GM12878 (cell line): ENCODE measurements at regions of chr5 and their contacts with region 1.

Region 1: GRCh38 chr5:159156426-159157238 is 52.7 kb downstream of the RNF145 start:
- DNase-seq: peak; percentile 30
- ATAC-seq: peak; percentile 96
- H3K4me3 ChIP-seq: no peak overlapping the region
- H3K27ac ChIP-seq: no peak overlapping the region
- H3K4me1 ChIP-seq: peaks cover 7% of the 10 kb centered on the region
- H3K27me3 ChIP-seq: no peaks in the 10 kb centered on the region
- CTCF ChIP-seq: peak; percentile 79 to 83 (median 82)
- EP300 ChIP-seq: no peak
- POLR2A ChIP-seq: no peak
- RAD21 ChIP-seq: peak; percentile 93

Region 2: GRCh38 chr5:158634714-158635113 is 521.9 kb before region 1 on chr5:
- CTCF ChIA-PET with region 1: no interaction called
- POLR2A ChIA-PET with region 1: no interaction called
- RAD21 ChIA-PET with region 1: no interaction called
- SMC1A ChIA-PET with region 1: no interaction called
- in situ Hi-C with region 1: no loop called
- intact Hi-C with region 1: no loop called
- DNase-seq: no peak
- ATAC-seq: no peak
- H3K4me3 ChIP-seq: no peak overlapping the region
- H3K27ac ChIP-seq: no peak overlapping the region
- H3K4me1 ChIP-seq: no peaks in the 10 kb centered on the region
- H3K27me3 ChIP-seq: no peaks in the 10 kb centered on the region
- CTCF ChIP-seq: no peak
- EP300 ChIP-seq: no peak
- POLR2A ChIP-seq: no peak
- RAD21 ChIP-seq: no peak

Region 3: GRCh38 chr5:159171274-159171673 is 14.6 kb after region 1 on chr5:
- CTCF ChIA-PET with region 1: interaction called, 21 read pairs
- POLR2A ChIA-PET with region 1: no interaction called
- RAD21 ChIA-PET with region 1: interaction called, 5 read pairs
- SMC1A ChIA-PET with region 1: interaction called, 8 read pairs
- in situ Hi-C with region 1: no loop called
- intact Hi-C with region 1: no loop called
- DNase-seq: no peak
- ATAC-seq: peak; percentile 35; the same call in 2 of the 3 replicates
- H3K4me3 ChIP-seq: no peak overlapping the region
- H3K27ac ChIP-seq: no peak overlapping the region
- H3K4me1 ChIP-seq: no peaks in the 10 kb centered on the region
- H3K27me3 ChIP-seq: no peaks in the 10 kb centered on the region
- CTCF ChIP-seq: no peak
- EP300 ChIP-seq: no peak
- POLR2A ChIP-seq: no peak
- RAD21 ChIP-seq: no peak

Region 4: DNA sequence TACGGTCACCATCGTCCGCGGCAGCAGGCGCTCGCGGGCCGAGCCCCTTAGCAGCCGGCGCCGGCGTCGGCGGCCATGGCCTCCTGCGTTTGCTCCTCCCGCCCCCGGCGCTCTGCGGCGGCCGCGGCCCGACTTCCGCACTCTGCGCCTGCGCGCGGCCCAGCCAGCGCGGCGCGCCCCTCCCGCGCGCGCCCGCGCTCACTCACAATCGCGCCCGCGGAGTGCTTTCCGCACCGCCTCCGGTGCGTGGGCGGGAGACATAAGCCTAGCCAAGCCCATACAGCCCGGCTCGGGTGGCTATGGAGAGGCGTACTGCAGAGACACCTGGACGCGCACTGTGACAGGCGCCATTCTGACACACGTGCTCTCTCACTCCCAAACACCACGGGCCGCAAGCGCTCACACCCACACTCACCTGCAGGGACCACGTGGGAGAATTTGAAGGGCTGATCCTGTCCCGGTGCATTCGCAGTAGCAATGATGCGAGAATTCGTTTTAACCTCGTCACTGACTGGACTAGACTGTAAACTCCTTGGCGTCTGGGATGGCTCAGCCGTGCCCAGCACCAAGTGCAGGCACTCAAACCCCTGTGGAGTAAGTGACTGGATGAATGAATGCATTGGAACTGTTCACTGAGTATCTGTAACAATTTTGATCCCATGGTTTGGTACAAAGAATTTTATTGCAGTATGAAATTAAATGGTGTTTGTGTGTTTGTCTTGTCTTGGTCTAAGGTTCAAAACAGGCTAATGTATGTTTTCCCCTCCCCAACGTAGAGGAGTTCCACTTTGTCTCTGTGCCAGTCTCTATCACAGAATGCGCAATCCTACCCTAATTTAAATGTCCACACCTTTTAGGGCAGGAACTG is 53.0 kb after region 1 on chr5 and contains the start of gene RNF145:
- CTCF ChIA-PET with region 1: interaction called, 26 read pairs
- POLR2A ChIA-PET with region 1: interaction called, 3 read pairs
- RAD21 ChIA-PET with region 1: interaction called, 23 read pairs
- SMC1A ChIA-PET with region 1: interaction called, 16 read pairs
- in situ Hi-C with region 1: no loop called
- intact Hi-C with region 1: loop called (anchors 2 kb)
- DNase-seq: peak; percentile 62
- ATAC-seq: peak; percentile 71
- H3K4me3 ChIP-seq: peak within 1 kb of the TSS; percentile 79
- H3K27ac ChIP-seq: peak within 1 kb of the TSS; percentile 83
- H3K4me1 ChIP-seq: peaks cover 9% of the 10 kb centered on the region
- H3K27me3 ChIP-seq: no peaks in the 10 kb centered on the region
- CTCF ChIP-seq: no peak
- EP300 ChIP-seq: no peak
- POLR2A ChIP-seq: peak; percentile 87
- RAD21 ChIP-seq: no peak
- polyA plus RNA-seq, gene RNF145: 18.6 to 25.2 TPM

Region 5: GRCh38 chr5:159286420-159287035 is 129.9 kb after region 1 on chr5:
- CTCF ChIA-PET with region 1: interaction called, 43 read pairs
- POLR2A ChIA-PET with region 1: no interaction called
- RAD21 ChIA-PET with region 1: interaction called, 14 read pairs
- SMC1A ChIA-PET with region 1: interaction called, 20 read pairs
- in situ Hi-C with region 1: no loop called
- intact Hi-C with region 1: no loop called
- DNase-seq: no peak
- ATAC-seq: peak; percentile 56
- H3K4me3 ChIP-seq: no peak overlapping the region
- H3K27ac ChIP-seq: no peak overlapping the region
- H3K4me1 ChIP-seq: no peaks in the 10 kb centered on the region
- H3K27me3 ChIP-seq: no peaks in the 10 kb centered on the region
- CTCF ChIP-seq: peak; percentile 30 to 52 (median 36); a peak in 4 of 6 replicates
- EP300 ChIP-seq: no peak
- POLR2A ChIP-seq: no peak
- RAD21 ChIP-seq: peak; percentile 70

Region 6: DNA sequence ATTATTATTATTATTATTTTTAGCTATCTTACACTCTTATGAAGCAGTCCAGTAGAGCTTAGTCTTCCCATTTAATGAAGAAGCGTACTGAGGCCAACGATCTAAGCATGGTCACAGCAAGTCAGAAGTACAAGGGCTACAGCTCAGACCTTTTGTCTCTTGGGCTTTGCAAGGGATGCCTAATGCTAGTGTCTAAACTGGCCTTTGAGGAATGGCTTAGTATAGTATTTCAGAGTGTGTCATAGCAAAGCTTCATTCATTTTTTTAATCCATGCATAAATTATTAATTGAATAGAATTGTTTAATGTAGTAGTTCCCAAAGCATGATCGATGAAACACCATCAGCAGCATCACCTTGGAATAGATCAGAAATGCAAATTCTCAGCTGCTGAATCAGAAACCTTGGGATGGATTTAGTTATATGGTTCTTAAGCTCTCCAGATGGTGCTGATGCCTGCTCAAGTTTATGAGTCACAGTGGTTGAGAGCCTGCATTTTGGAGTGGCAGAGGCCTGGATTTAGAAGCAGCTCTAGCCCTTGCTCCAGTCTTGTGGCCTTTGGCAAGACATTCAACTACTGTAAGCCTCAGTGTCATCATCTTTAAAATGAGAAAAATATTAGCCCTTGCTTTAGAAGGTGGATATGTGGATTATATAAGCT is 167.6 kb after region 1 on chr5:
- CTCF ChIA-PET with region 1: interaction called, 216 read pairs
- POLR2A ChIA-PET with region 1: no interaction called
- RAD21 ChIA-PET with region 1: interaction called, 112 read pairs
- SMC1A ChIA-PET with region 1: interaction called, 131 read pairs
- in situ Hi-C with region 1: loop called (anchors 5 kb)
- intact Hi-C with region 1: no loop called
- DNase-seq: no peak
- ATAC-seq: no peak
- H3K4me3 ChIP-seq: no peak overlapping the region
- H3K27ac ChIP-seq: no peak overlapping the region
- H3K4me1 ChIP-seq: no peaks in the 10 kb centered on the region
- H3K27me3 ChIP-seq: 0 out of 4 replicates have a peak, but pooled peaks cover 0 to 3% of the 10 kb centered on the region in 2 experiments
- CTCF ChIP-seq: no peak
- EP300 ChIP-seq: no peak
- POLR2A ChIP-seq: no peak
- RAD21 ChIP-seq: no peak

Region 7: GRCh38 chr5:159965031-159965837 is 808.6 kb after region 1 on chr5:
- CTCF ChIA-PET with region 1: interaction called, 6 read pairs
- POLR2A ChIA-PET with region 1: no interaction called
- RAD21 ChIA-PET with region 1: interaction called, 4 read pairs
- SMC1A ChIA-PET with region 1: interaction called, 3 read pairs
- in situ Hi-C with region 1: no loop called
- intact Hi-C with region 1: loop called (anchors 5 kb)
- DNase-seq: no peak
- ATAC-seq: peak; percentile 91
- H3K4me3 ChIP-seq: no peak overlapping the region
- H3K27ac ChIP-seq: no peak overlapping the region
- H3K4me1 ChIP-seq: no peaks in the 10 kb centered on the region
- H3K27me3 ChIP-seq: 0 out of 4 replicates have a peak, but pooled peaks cover 0 to 4% of the 10 kb centered on the region in 2 experiments
- CTCF ChIP-seq: peak; percentile 45 to 68 (median 59)
- EP300 ChIP-seq: no peak
- POLR2A ChIP-seq: no peak
- RAD21 ChIP-seq: peak; percentile 58